Activated CD4-positive, alpha-beta T cell treated with anti-CD3 and anti-CD28 coated beads for 36 hours (primary cell): ENCODE measurements at regions of chr1 and their contacts with region 1.

Region 1: DNA sequence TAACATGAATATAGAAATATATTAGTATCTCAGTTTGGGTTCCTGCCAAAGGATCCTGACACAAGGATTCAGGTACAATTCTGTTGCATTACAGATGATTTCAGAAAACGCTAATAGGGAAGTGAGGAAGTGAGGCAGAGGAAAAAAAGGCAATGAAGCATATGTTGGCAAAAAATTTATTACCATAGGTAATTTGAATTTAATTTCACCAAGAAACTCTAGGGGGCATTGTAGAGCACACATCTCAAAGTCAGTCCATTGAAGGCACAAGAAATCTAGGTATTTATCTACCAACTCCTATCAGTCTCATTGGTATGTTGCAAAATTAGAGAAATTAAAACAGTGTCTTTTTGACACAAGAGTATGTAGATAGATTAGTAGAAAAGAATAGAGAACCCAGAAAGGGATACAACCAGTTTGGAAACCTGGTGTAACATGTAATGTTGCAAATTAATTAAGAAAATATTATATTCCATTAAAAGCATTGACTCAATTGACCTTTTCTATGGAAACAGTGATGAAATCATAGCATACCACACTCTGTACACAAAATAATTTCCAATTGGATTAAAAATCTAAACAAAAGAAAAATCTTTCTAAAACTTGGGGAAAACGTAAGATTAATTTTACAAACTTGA is 104.9 kb upstream of the SNX7 start:
- DNase-seq: no peak
- ATAC-seq: no peak
- H3K4me3 Mint-ChIP-seq: no peak overlapping the region
- H3K27ac Mint-ChIP-seq: no peak overlapping the region
- H3K4me1 Mint-ChIP-seq: no peaks in the 10 kb centered on the region
- H3K27me3 Mint-ChIP-seq: no peaks in the 10 kb centered on the region

Region 2: DNA sequence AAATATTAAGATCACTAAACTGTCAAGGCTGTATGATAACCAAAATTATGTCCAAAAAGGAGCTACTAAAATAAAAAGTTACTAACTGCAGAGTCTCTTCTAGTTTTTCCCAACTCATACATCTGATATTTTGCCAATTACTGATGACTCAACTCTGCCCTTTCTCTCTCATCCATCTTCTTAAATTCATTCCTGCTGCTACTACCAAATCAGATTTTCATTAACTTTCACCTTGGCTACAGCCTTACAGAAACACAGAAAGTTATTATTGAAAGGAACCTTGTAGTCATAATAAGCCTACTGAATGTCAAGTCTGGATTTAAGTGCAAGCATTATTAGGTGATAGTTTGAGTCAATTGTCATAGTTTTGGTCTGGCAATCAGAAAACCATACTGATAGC is 908.9 kb before region 1 on chr1:
- CTCF ChIA-PET with region 1: no interaction called
- POLR2A ChIA-PET with region 1: no interaction called
- intact Hi-C with region 1: loop called in 1 of 2 experiments (anchors 10 kb)
- DNase-seq: no peak
- ATAC-seq: no peak
- H3K4me3 Mint-ChIP-seq: no peak overlapping the region
- H3K27ac Mint-ChIP-seq: no peak overlapping the region
- H3K4me1 Mint-ChIP-seq: no peaks in the 10 kb centered on the region
- H3K27me3 Mint-ChIP-seq: no peaks in the 10 kb centered on the region

Region 3: GRCh38 chr1:98575955-98576354 is 19.3 kb after region 1 on chr1:
- CTCF ChIA-PET with region 1: no interaction called
- POLR2A ChIA-PET with region 1: no interaction called
- intact Hi-C with region 1: no loop called
- DNase-seq: no peak
- ATAC-seq: no peak
- H3K4me3 Mint-ChIP-seq: no peak overlapping the region
- H3K27ac Mint-ChIP-seq: no peak overlapping the region
- H3K4me1 Mint-ChIP-seq: no peaks in the 10 kb centered on the region
- H3K27me3 Mint-ChIP-seq: no peaks in the 10 kb centered on the region